ENCODE measurements at regions of chr1 and their contacts with region 1.

Region 1: GRCh38 chr1:155063550-155064110 is at the start of gene EFNA4:
- DNase-seq: peak; percentile 84 to 92 (median 92)
- ATAC-seq: peak; percentile 86 to 90
- H3K4me3 ChIP-seq: peak within 1 kb of the TSS; percentile 81
- H3K27ac ChIP-seq: peak within 1 kb of the TSS; percentile 82
- H3K4me1 ChIP-seq: no peaks in the 10 kb centered on the region
- H3K27me3 ChIP-seq: no peaks in the 10 kb centered on the region
- total RNA-seq, gene EFNA4: 3.3 to 4.2 (median 3.7) TPM

Region 2: DNA sequence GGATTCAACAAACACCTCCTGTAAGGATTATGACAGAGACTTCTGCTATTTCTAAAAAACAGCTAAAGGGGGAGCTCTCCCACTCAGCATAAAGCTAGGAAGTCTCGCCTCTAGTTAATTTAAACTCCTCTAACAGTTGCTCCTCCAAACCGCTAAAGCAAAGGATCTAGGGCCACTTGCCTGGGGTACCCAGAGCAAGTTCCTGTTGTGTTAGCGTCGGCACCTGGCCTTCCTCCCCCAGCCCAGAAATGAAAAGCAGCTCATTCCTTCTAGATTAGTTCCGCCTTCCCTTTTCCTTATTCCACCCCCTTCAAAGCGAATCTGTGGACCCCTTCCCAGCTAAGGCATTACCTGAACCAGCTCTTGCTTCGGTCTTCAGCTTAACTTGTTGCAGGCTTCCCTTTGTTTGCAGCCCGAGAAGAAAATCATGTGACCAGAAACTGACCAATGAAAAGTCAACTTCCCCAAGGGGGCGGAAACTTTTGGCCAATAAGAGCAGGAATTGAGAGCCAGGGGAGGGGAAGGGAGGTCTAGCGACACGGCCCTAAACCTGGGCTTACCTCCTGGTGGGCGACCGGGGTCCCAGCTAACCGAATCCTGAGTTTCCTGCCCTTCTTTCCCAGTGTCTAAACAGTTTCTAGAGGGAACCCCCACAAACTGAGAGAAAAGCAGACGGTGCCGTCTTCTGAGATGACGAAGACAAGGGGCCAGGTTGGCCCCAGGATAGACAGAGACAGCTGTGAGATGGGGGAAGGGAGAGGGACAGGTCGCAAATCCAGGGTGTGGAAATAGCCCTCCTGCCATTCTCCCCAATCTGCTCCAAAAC is 107.7 kb before region 1 on chr1 and contains the start of gene PBXIP1:
- intact Hi-C with region 1: loop called in 1 of 4 experiments (anchors 10 kb)
- DNase-seq: peak; percentile 59 to 77 (median 68)
- ATAC-seq: peak; percentile 82 to 83
- H3K4me3 ChIP-seq: peak within 1 kb of the TSS; percentile 95
- H3K27ac ChIP-seq: peak within 1 kb of the TSS; percentile 98
- H3K4me1 ChIP-seq: peaks cover 24% of the 10 kb centered on the region
- H3K27me3 ChIP-seq: no peaks in the 10 kb centered on the region
- total RNA-seq, gene PBXIP1: 84.8 to 104 (median 90.1) TPM

Region 3: DNA sequence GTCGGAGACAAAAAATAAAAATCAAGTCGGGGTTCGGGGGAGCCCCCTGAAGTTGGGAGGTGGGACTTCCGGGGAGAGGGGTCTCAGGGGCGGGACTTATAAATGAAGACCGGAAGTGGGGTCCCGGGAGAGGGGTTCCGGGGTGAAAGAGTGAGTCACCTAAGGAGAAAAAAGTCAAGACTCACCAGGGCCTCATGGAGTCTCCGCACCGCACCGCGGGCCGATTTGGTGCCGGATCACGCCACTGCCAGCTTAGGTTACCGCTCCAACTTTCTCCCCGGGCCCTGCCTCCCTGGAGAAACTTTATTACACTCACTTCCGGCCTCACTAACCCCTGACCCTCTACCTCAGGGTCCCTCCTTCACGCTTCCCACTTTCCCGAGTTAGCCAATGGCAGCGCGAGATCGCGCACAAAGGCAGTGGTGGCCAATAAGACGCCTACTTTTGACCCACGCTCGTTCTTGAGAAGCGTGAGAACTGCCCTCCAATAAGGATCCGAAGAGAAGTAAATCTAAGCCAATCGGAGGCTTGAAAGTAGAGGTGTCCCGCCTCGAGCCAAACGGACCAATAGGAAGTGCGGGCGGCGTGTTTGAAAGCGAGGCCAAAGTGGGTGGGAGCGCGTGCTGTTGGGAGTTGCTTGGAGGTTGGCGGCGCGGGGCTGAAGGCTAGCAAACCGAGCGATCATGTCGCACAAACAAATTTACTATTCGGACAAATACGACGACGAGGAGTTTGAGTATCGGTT is 89.4 kb before region 1 on chr1 and contains the start of gene CKS1B:
- intact Hi-C with region 1: loop called in 1 of 4 experiments (anchors 10 kb)
- DNase-seq: peak; percentile 98 to 99 (median 98)
- ATAC-seq: peak; percentile 88 to 91
- H3K4me3 ChIP-seq: peak within 1 kb of the TSS; percentile 67
- H3K27ac ChIP-seq: peak within 1 kb of the TSS; percentile 99
- H3K4me1 ChIP-seq: peaks cover 15% of the 10 kb centered on the region
- H3K27me3 ChIP-seq: no peaks in the 10 kb centered on the region
- total RNA-seq, gene CKS1B: 19.9 to 28.1 (median 23.4) TPM

Region 4: DNA sequence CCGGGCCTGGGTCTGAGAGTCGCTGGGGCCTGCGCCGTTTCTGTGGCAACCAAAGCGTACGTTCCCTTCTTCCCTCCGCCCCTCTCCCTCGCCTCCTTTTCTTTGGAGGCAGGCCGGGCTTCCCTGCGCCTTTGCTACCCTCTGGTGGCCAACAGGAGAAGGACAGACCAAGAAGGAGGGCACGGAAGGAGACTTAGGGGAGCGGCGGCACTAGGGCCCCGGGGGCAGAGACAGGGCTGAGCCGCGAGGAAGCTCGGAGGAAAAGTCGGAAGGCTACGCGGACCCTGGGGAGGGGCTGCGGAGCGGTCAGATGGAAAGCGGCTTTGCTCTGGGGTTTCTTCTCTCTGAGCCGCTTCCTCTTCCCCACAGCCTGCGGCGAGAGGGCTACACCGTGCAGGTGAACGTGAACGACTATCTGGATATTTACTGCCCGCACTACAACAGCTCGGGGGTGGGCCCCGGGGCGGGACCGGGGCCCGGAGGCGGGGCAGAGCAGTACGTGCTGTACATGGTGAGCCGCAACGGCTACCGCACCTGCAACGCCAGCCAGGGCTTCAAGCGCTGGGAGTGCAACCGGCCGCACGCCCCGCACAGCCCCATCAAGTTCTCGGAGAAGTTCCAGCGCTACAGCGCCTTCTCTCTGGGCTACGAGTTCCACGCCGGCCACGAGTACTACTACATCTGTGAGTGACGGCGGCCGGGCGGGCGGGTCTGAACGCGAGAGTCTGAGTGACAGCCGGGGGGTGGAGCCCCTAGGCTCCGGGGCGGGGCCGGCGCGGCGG is 21.3 kb after region 1 on chr1:
- intact Hi-C with region 1: loop called in 1 of 4 experiments (anchors 2 kb)
- DNase-seq: peak; percentile 93 to 98 (median 96)
- ATAC-seq: peak; percentile 91 to 92
- H3K4me3 ChIP-seq: peak overlapping the region; percentile 76
- H3K27ac ChIP-seq: peak overlapping the region; percentile 89
- H3K4me1 ChIP-seq: peaks cover 3% of the 10 kb centered on the region
- H3K27me3 ChIP-seq: no peaks in the 10 kb centered on the region